ENCODE measurements at regions of chr5 and their contacts with region 1.

Region 1: DNA sequence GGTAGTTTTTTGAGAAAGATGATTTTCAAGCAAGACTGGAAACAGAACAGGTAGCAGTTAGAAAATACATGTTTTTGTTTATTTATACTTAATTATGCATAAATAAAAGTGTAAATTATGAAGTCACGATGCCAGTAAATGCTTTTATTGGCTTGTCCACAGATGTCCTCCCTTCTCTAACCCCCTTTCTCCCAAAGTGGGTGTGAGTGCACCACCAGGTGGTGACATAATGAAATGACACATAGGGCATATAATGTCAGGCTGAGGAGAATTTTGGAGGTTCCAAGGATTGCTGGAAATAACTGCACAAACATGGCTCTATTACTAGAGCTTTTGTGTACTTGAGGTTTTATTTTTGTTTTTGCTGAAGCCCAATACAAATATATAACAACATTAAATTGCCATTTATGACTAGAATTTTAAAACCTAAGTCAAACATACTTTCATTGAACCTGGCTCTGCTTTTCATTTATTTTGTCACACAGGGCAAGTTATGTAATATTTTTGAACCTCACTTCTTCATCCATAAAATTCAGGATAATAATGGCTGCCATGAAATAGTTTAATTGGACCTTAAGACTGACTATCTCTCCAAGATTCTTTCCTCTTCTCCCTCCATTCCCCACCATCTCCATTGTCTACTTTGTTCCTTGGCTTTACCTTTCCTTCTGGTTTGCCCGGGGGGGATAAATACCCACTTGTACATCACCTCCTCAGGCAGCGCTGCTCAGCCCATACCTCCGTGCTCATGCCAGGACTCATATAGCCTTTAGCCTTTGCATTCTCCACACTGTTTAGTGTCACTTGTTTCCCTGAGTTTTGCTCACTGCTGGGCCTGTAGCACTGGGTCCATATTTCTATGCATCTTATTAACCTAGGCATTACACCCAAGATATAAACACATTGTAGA is 168.8 kb downstream of the PDE4D start:
- DNase-seq: peak; percentile 55
- H3K4me3 ChIP-seq: no peak overlapping the region
- H3K27ac ChIP-seq: no peak overlapping the region
- H3K4me1 ChIP-seq: no peaks in the 10 kb centered on the region
- H3K27me3 ChIP-seq: no peaks in the 10 kb centered on the region
- CTCF ChIP-seq: peak; percentile 70

Region 2: GRCh38 chr5:59660737-59661136 is 64.0 kb before region 1 on chr5:
- intact Hi-C with region 1: loop called (anchors 10 kb)
- DNase-seq: no peak
- H3K4me3 ChIP-seq: no peak overlapping the region
- H3K27ac ChIP-seq: no peak overlapping the region
- H3K4me1 ChIP-seq: no peaks in the 10 kb centered on the region
- H3K27me3 ChIP-seq: no peaks in the 10 kb centered on the region
- CTCF ChIP-seq: peak; percentile 13

Region 3: DNA sequence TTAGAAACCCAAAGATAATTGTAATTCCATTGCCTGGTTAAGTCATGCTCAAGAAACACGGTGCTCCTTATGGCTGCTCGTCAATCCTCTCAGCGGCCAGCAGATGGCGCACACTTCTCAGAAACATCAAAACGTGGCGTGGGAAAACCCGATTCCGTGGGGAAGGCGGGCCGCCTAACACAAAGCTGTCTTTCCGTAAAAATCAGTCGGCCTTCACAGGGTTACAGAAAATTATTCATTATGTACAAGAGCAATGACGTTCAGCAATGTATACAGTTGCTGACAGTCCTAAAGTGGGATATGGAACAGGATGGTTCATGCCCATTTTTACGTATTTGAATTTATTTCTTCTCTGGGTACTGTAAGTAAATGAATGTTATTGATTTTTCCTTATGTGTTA is 85.3 kb after region 1 on chr5:
- intact Hi-C with region 1: no loop called
- DNase-seq: peak; percentile 70
- H3K4me3 ChIP-seq: no peak overlapping the region
- H3K27ac ChIP-seq: no peak overlapping the region
- H3K4me1 ChIP-seq: no peaks in the 10 kb centered on the region
- H3K27me3 ChIP-seq: no peaks in the 10 kb centered on the region
- CTCF ChIP-seq: peak; percentile 89